Heart left ventricle (tissue), 16 donors: ENCODE measurements at regions of chr4 and their contacts with region 1.

Region 1: GRCh38 chr4:88284439-88285234 is at the start of gene PPM1K:
- DNase-seq: peak; percentile 100
- ATAC-seq: peak; percentile 95 to 98 (median 96)
- H3K4me3 ChIP-seq: peak within 1 kb of the TSS; percentile 61 to 98 (median 80)
- H3K27ac ChIP-seq: peak within 1 kb of the TSS; percentile 94 to 99 (median 96)
- H3K4me1 ChIP-seq: peaks cover 0 to 37% (median 11%) of the 10 kb centered on the region in 12 donors
- H3K27me3 ChIP-seq: no peaks in the 10 kb centered on the region
- CTCF ChIP-seq: peak in 6 of 12 donors; percentile 8 to 47 (median 22)
- POLR2A ChIP-seq: peak; percentile 20 to 94
- total RNA-seq, gene PPM1K: 140 to 332 (median 245) TPM

Region 2: DNA sequence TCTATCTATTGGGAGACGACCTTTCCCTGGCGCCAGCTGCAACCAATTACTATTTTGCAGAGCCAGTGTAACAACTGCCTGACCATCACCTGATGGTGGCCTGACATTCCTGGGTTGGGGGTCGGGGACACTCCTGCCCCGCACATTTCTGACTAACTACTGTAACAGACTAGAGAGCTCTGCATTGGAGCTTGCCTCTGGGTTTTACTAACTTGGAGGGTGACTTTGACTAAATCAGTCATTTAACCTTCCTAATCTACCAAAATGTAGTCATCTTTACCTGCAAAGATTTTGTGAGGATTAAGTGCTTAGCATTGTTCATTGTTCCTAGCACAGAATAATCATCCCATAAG is 88.6 kb before region 1 on chr4:
- intact Hi-C with region 1: no loop called
- DNase-seq: no peak
- ATAC-seq: no peak
- H3K4me3 ChIP-seq: no peak overlapping the region
- H3K27ac ChIP-seq: no peak overlapping the region
- H3K4me1 ChIP-seq: no peaks in the 10 kb centered on the region
- H3K27me3 ChIP-seq: no peaks in the 10 kb centered on the region
- CTCF ChIP-seq: no peak
- POLR2A ChIP-seq: no peak

Region 3: DNA sequence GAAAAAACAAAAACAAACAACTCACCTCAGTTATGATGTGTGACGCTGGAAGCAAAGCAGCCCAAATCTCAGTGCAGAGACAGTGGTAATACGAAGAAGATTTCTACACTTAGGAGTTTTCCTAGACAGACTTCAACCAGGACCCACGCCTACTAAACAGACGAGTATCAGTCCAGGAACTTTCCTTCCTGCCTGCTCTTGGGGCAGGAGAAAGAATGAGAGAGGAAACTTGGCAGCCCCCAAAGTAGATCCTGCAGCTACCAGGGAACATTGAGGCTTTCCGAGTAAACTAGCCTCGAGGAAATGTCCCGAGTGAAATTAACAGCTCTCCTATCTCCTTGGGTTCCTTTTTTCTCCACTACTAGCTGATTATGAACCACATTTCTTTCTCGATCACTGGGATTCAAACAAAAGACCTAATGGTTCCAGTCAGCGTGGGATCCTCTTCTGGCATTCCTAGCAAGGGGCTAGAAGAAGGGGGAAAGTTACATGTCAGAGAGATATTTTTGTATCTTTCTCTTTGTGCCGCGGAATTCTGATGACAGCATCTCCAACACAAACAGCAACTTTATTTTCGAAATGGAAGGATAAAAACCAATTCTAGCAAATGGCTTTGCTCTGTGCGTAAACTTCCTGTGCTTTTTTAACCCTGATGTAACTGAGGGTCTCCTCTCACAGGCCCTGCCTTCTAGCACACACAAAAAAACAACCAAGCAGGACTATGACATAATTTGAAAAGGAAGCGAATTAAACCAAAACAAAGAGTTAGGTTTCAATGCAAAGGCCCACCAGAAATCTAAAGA is 53.5 kb before region 1 on chr4:
- intact Hi-C with region 1: loop called in 1 of 10 experiments (anchors 5 kb)
- DNase-seq: no peak
- ATAC-seq: peak; percentile 39 to 74 (median 72)
- H3K4me3 ChIP-seq: peak overlapping the region in 10 of 12 donors; percentile 23 to 58 (median 48)
- H3K27ac ChIP-seq: peak overlapping the region in 11 of 12 donors; percentile 58 to 86 (median 78)
- H3K4me1 ChIP-seq: peaks cover 0 to 16% (median 6%) of the 10 kb centered on the region in 12 donors
- H3K27me3 ChIP-seq: no peaks in the 10 kb centered on the region
- CTCF ChIP-seq: no peak
- POLR2A ChIP-seq: no peak

Region 4: GRCh38 chr4:88366460-88366859 is 81.8 kb after region 1 on chr4:
- intact Hi-C with region 1: loop called in 1 of 10 experiments (anchors 5 kb)
- DNase-seq: no peak
- ATAC-seq: no peak
- H3K4me3 ChIP-seq: no peak overlapping the region
- H3K27ac ChIP-seq: no peak overlapping the region
- H3K4me1 ChIP-seq: peaks cover 0 to 5% (median 0%) of the 10 kb centered on the region in 12 donors
- H3K27me3 ChIP-seq: no peaks in the 10 kb centered on the region
- CTCF ChIP-seq: no peak
- POLR2A ChIP-seq: no peak

Region 5: DNA sequence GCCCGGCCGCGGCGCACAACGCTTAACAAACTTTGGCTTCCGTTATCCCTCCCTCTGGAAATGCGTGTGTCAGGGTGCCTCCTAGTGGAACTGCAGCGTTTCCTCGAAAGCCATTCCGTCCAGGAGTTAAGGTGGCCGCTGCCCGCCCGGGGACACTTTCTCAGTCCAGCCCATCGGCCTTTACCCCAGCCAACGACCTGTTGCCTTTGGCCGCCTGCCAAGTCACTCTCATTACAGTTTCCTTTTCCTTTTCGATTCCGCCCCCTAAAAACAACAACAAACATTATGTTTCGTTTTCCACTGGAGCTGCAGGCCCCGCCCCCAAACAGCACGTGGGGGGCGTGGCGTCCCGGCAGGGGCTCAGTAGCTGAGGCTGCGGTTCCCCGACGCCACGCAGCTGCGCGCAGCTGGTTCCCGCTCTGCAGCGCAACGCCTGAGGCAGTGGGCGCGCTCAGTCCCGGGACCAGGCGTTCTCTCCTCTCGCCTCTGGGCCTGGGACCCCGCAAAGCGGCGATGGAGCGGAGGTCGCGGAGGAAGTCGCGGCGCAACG is 172.2 kb after region 1 on chr4 and contains the start of gene HERC5:
- intact Hi-C with region 1: loop called in 6 of 10 experiments (anchors 2 to 10 kb)
- DNase-seq: peak; percentile 93 to 95 (median 95)
- ATAC-seq: peak; percentile 94 to 97 (median 96)
- H3K4me3 ChIP-seq: peak within 1 kb of the TSS; percentile 52 to 92 (median 73)
- H3K27ac ChIP-seq: peak within 1 kb of the TSS; percentile 33 to 85 (median 72)
- H3K4me1 ChIP-seq: peaks cover 0 to 25% (median 5%) of the 10 kb centered on the region in 12 donors
- H3K27me3 ChIP-seq: no peaks in the 10 kb centered on the region
- CTCF ChIP-seq: peak; percentile 41 to 88 (median 72)
- POLR2A ChIP-seq: no peak
- total RNA-seq, gene HERC5: 0.88 to 5.5 (median 2.3) TPM

Region 6: DNA sequence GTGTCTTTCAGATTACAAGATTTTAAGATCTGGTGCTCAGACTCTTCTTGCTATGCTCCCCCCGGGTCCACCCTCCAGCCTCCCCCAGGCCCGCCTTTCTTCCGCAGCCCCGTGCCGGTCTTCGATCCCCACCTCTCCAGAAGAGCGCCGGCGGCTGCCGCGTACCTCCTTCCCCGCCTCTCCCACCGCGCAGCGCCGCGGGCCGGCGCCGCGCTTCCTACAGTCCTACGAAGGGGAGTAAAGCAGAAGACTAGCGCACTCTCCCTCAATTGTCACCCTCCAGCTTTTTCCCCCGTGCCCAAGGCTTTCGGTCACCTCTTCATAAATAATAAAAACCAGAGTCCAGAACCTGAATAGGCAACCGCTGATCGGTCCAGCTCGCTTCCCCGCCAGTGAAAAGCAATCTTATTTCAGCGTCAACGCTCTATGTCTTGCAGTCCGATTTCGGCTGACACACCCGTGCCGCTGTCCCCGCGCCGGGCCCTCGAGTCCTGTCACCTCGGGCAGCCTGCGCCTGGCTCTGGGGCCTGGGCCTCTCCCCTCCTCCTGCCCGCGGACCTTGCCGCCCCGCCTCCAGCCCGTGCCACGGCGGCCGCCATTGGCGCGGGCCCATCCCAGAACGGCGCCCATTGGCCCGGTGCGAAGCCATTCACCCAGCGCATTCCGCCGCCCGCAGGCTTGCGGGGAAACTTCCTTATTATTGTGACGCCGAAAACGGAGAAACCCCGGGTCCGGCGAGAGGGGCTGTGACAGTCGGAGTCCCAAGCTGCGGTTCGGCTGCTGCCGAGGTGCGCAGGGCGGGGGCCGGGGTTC is 307.4 kb after region 1 on chr4 and contains the start of gene HERC3:
- intact Hi-C with region 1: loop called in 1 of 10 experiments (anchors 10 kb)
- DNase-seq: peak; percentile 94 to 97 (median 95)
- ATAC-seq: peak; percentile 97 to 98 (median 98)
- H3K4me3 ChIP-seq: peak within 1 kb of the TSS; percentile 83 to 99 (median 96)
- H3K27ac ChIP-seq: peak within 1 kb of the TSS; percentile 89 to 99 (median 97)
- H3K4me1 ChIP-seq: peaks cover 0 to 43% (median 21%) of the 10 kb centered on the region in 12 donors
- H3K27me3 ChIP-seq: no peaks in the 10 kb centered on the region
- CTCF ChIP-seq: peak in 4 of 12 donors; percentile 14 to 29 (median 21)
- POLR2A ChIP-seq: peak in 1 of 2 donors; percentile 71
- total RNA-seq, gene HERC3: 32.2 to 66.6 (median 48.9) TPM